ENCODE measurements at regions of chr2 and their contacts with region 1.

Region 1: DNA sequence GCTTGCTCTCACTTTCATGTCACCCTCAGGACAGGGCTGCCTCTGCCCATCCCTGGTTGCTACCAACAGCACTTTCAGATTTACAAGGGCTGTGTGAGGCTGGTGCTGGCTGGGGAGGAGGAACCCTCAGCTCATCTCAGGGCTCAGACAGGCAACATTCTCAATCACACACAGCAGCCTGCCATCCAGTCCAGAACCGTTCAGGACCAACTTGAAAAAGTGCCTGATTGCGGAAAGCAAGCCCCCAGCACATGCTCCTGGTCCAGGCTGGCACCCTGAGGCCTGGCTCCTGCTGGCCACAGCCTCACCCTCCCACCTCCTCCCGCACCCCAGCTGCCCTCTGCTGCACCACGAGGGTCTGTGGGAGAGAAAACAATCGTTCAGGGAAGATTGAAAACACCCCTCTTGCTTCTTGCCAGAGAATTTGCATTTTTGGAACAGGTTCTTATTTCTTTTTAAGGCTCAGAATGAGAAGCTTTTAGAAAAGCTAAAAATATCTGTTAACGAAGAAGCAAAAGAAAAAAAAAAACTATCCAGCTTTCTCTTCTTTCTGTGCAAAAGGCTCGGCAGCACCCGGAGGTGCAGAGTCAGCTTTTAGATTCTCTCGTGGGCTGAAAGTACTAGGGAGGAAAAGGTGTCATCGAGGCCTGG is 403.8 kb upstream of the ID2 start:
- DNase-seq: peak in 1 of 10 donors; percentile 49
- H3K4me3 ChIP-seq: peak overlapping the region in 20 of 59 donors; percentile 0 to 35 (median 10)
- H3K27ac ChIP-seq: peak overlapping the region in 52 of 59 donors; percentile 0 to 85 (median 69)
- H3K27me3 ChIP-seq: peaks cover 0 to 10% (median 0%) of the 10 kb centered on the region in 45 donors
- CTCF ChIP-seq: no peak

Region 2: GRCh38 chr2:7665880-7666279 is 612.2 kb before region 1 on chr2:
- intact Hi-C with region 1: no loop called
- DNase-seq: no peak
- H3K4me3 ChIP-seq: no peak overlapping the region
- H3K27ac ChIP-seq: peak overlapping the region in 3 of 59 donors; percentile 6 to 83 (median 22)
- H3K27me3 ChIP-seq: peaks cover 0 to 8% (median 0%) of the 10 kb centered on the region in 45 donors
- CTCF ChIP-seq: no peak

Region 3: GRCh38 chr2:8004250-8004681 is 273.8 kb before region 1 on chr2:
- intact Hi-C with region 1: loop called in 1 of 2 experiments (anchors 10 kb)
- DNase-seq: no peak
- H3K4me3 ChIP-seq: no peak overlapping the region
- H3K27ac ChIP-seq: peak overlapping the region in 15 of 59 donors; percentile 1 to 61 (median 39)
- H3K27me3 ChIP-seq: no peaks in the 10 kb centered on the region
- CTCF ChIP-seq: no peak